ENCODE measurements at regions of chr11 and their contacts with region 1.

Region 1: DNA sequence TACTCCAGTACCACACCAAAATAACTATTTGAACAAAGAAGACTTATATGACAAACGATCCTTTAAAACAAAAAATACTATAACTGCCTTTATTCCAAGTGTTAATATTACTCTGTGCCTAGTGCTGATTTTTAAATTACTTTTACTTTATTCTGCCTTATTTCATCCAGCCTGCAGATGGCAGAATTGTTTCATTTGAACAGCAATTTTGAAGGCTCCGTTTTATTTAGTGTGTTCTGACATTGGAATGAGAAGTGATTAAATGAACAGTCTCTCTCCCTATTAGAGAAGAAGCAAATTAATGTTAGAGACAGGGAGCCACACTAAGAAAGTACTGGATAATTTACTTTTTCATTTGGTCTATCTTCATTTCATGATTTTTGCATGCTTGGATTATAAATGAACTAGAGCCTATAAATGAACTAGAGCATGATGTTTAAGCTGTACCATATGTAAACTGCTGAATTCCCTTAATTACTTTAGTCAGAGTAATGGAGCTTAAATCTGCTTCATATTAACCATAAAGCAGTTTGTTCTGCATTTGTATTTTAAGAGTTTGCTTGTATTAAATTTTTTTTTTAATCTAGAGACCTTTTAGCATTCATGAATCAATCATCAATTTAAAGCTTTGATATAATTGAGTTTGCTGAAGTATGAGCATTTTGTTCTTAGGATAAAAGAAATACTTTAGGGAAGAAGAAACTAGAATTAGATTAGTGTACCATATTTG is 9.8 kb downstream of the PDHX start:
- DNase-seq: no peak
- H3K4me3 ChIP-seq: no peak overlapping the region
- H3K27ac ChIP-seq: no peak overlapping the region
- H3K4me1 ChIP-seq: no peaks in the 10 kb centered on the region
- H3K27me3 ChIP-seq: no peaks in the 10 kb centered on the region
- CTCF ChIP-seq: peak; percentile 46 to 75 (median 50)
- POLR2A ChIP-seq: no peak

Region 2: DNA sequence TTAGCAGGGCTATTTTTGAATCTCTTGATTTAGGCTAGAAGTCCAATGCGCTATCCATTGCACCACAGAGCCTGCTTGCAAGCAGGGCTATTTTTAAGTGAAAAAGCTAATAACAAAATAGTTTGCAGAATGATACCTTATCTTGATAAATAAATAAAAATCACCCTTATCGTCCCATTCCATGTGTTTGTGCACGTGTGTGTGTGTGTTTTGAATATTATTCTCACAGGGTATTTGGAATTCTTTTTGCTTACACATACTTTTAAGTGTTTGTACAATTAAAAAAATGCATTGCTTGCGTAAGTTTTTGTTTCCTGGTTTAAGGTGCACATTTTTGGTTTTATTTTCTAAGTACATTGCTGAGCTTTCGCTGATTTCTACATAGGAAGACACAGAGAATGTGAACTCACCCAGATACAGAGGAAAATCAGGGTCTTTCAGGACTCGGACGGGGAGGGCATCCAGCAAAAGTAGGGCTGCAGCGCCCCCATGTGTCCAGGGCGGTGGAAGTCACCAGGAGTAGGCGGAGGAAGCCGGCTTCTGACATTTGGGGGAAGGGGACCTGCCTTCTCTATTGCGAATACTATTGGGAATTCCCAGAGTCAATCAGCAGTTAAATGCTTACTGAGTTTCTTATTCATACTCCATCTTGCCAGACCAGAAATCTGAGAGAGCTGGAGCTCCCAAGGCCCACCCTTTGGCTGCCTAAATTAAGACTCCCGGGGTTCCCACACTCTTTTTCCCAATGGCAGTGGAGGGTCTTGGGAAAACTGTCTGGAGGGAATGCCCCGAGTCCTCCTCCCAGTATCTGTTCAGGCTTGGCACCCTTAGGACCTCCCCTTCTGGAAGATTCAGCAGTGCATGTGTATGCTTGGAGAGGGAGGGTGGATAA is 465.9 kb after region 1 on chr11:
- intact Hi-C with region 1: loop called (anchors 10 kb)
- DNase-seq: peak; percentile 86
- H3K4me3 ChIP-seq: no peak overlapping the region
- H3K27ac ChIP-seq: no peak overlapping the region
- H3K4me1 ChIP-seq: no peaks in the 10 kb centered on the region
- H3K27me3 ChIP-seq: no peaks in the 10 kb centered on the region
- CTCF ChIP-seq: peak; percentile 46 to 84 (median 78)
- POLR2A ChIP-seq: no peak

Region 3: GRCh38 chr11:35485656-35486322 is 559.5 kb after region 1 on chr11:
- intact Hi-C with region 1: loop called (anchors 10 kb)
- DNase-seq: peak; percentile 90
- H3K4me3 ChIP-seq: no peak overlapping the region
- H3K27ac ChIP-seq: no peak overlapping the region
- H3K4me1 ChIP-seq: no peaks in the 10 kb centered on the region
- H3K27me3 ChIP-seq: no peaks in the 10 kb centered on the region
- CTCF ChIP-seq: peak; percentile 9 to 92 (median 74)
- POLR2A ChIP-seq: no peak